Endothelial cell of umbilical vein (primary cell): ENCODE measurements at regions of chr16 and their contacts with region 1.

Region 1: GRCh38 chr16:30091474-30092372 is at the start of gene TBX6:
- DNase-seq: peak; percentile 92
- H3K4me3 ChIP-seq: peak within 1 kb of the TSS; percentile 6 to 53 (median 47)
- H3K27ac ChIP-seq: peak within 1 kb of the TSS; percentile 46
- H3K4me1 ChIP-seq: peaks cover 23% of the 10 kb centered on the region
- H3K27me3 ChIP-seq: no peaks in the 10 kb centered on the region
- CTCF ChIP-seq: peak; percentile 56 to 86
- POLR2A ChIP-seq: peak; percentile 62
- total RNA-seq, gene TBX6: 0.42 and 0.60 TPM in 2 replicates

Region 2: DNA sequence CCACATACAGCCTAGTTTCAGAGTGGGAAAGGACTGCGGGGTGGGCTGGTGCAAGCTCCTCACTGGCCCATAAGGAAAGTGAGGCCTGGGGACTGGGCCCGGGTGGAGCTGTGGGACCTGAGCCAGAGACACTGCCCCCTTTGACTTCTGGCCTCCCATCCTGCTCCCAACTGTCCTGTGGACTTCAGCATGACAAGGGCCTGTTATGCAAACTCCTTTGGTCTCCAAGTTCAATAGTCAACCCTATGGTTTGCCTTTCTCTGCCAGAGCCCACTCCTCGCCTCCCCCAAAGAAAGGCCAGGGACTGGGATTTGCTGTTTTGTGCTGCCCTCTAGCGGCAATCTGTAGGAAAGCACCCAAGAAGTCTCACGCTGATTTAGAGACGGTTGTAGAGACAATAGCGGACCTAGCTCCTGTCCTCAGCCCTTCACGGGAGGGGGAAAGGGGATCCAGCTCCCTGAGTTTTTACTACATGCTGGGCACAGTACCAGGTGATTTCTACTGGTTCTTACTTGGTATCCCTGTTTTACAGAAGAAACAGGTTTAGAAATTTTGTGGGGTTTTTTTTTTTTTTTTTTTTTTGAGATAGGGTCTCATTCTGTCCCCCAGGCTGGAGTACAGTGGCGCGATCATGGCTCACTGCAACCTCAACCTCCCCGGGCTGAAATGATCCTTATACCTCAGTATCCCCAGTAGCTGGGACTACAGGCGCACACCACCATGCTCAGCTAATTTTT is 59.5 kb before region 1 on chr16:
- CTCF ChIA-PET with region 1: interaction called, 14 read pairs
- POLR2A ChIA-PET with region 1: no interaction called
- dilution Hi-C with region 1: no loop called
- intact Hi-C with region 1: no loop called
- DNase-seq: peak; percentile 56
- H3K4me3 ChIP-seq: no peak overlapping the region
- H3K27ac ChIP-seq: no peak overlapping the region
- H3K4me1 ChIP-seq: no peaks in the 10 kb centered on the region
- H3K27me3 ChIP-seq: peaks cover 19 to 20% of the 10 kb centered on the region in 2 experiments
- CTCF ChIP-seq: peak; percentile 75 to 80
- POLR2A ChIP-seq: no peak

Region 3: DNA sequence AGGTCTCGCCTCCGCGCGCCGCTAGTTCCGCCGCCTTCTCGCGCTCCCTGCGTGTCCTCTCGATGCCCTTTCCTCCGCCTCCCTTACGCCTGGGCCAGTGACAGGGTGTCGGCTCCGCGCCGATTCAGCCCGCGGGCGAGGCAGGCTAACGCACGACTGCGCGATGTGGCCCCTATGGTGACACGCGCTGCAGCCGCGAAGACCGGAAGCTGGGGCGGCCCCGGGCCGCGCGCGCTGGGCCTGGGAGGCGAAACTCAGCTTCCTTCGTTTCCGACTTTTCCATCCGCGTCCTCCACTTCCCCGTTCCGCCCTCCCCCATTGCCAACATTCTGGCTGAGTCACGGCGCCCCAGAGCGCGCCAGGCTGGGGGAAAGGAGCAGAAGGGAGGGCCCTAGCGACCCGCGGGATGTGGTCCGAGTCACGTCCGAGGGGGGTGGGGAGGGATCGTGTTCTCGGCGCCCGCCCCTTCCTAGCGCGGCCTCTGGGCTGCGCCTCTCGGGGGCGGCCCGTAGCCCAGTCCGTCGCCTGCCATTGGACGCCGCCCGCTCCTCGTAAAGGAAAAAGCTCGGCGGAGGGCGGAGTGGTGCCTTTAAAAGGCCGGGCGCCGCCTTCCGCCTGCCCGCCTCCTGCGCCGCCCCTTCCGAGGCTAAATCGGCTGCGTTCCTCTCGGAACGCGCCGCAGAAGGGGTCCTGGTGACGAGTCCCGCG is 26.4 kb before region 1 on chr16 and contains the start of gene ALDOA:
- CTCF ChIA-PET with region 1: interaction called, 55 read pairs
- POLR2A ChIA-PET with region 1: interaction called, 8 read pairs
- dilution Hi-C with region 1: no loop called
- intact Hi-C with region 1: loop called (anchors 1 kb)
- DNase-seq: peak; percentile 99
- H3K4me3 ChIP-seq: peak within 1 kb of the TSS; percentile 71 to 95 (median 91)
- H3K27ac ChIP-seq: peak within 1 kb of the TSS; percentile 78
- H3K4me1 ChIP-seq: peaks cover 29% of the 10 kb centered on the region
- H3K27me3 ChIP-seq: no peaks in the 10 kb centered on the region
- CTCF ChIP-seq: no peak
- POLR2A ChIP-seq: peak; percentile 98
- total RNA-seq, gene ALDOA: 1,029 and 1,114 TPM in 2 replicates

Region 4: DNA sequence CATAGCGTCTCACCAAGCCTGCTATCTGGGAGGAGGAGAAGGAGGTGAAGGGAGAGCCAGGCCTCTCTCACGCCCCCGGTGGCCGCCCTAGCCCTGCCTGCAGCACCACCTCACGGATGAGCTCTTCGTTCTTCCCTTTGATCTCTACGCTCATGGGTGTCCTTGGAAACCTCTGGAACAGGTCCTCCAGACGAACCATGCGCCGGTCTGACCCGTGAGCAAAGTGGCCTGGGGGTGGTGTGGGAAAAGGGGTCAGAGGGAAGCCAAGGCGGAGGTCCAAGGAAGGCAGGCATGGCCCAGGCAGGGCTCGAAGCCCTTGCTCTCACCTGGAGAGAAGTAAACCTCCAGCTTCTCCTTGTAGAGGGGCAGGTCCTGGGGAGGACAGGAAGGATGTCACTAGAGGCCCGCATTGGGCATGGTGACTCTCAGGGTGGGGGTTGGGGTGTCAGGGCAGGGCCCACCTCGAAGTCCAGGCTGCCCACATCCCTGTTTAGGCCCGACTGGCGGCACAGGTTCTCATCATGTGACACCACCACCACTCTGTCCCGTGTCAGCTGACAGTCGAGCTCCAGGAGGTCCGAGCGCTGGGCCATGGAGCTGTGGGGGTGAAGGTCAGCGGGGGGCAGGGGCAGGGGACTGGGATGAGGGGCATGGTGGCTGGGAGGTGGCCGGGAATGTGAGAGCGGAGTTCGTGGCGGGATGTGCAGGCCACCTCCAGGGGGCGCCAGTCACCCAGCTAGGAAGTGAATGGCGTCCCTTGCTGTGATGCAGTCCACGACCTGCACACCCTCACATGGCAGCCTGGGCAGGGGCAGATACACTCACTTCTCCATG is 20.7 kb after region 1 on chr16:
- CTCF ChIA-PET with region 1: interaction called, 52 read pairs
- POLR2A ChIA-PET with region 1: no interaction called
- dilution Hi-C with region 1: no loop called
- intact Hi-C with region 1: no loop called
- DNase-seq: no peak
- H3K4me3 ChIP-seq: no peak overlapping the region
- H3K27ac ChIP-seq: no peak overlapping the region
- H3K4me1 ChIP-seq: no peaks in the 10 kb centered on the region
- H3K27me3 ChIP-seq: no peaks in the 10 kb centered on the region
- CTCF ChIP-seq: peak; percentile 50 to 74
- POLR2A ChIP-seq: no peak

Region 5: GRCh38 chr16:30417529-30418349 is 326.0 kb after region 1 on chr16:
- CTCF ChIA-PET with region 1: interaction called, 15 read pairs
- POLR2A ChIA-PET with region 1: no interaction called
- dilution Hi-C with region 1: no loop called
- intact Hi-C with region 1: no loop called
- DNase-seq: peak; percentile 96
- H3K4me3 ChIP-seq: peak overlapping the region in 2 of 3 experiments; percentile 44 to 57
- H3K27ac ChIP-seq: no peak overlapping the region
- H3K4me1 ChIP-seq: peaks cover 3% of the 10 kb centered on the region
- H3K27me3 ChIP-seq: no peaks in the 10 kb centered on the region
- CTCF ChIP-seq: peak in 1 of 2 donors; percentile 37
- POLR2A ChIP-seq: peak; percentile 42

Region 6: DNA sequence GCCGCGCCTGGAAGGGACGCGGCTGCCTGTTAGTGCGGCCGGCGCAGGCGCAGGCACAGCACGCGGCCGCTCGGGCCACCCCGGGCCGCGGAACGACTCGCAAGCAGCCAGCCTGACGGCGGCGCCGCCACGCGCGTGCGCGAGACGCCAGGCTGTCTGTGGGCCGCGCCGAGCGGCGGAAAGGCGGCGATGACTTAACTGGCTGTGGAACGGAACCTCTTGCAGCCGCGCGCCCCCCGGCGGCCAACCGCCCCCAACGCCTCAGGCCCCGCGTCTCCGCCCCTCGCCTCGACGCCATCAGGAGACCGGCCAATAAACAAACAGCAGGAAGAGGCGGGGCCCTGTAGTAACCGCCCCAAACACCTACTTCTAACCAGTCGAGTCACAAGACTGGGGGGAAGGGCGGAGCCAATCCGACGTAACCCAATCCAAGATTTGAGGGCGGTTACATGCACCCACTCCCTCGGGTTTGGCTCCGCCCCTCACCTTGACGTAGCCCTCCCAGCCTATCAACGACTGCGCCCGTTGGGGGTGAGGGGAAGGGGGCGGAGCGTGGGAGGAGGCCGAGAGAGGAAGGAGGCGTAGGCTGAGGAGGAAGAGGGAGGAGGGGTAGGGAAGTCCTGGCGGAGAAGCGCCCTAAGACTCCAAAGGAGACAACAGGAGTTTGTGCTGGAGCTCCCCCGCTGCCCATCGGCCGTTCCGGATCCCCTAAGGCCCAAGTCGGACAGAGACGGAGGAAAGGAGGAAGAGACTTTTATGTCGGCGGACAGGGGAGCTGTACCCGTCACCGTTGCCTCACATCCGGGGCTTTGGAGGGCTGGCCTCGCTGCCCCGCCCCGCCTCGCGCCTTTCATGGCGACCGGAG is 566.4 kb after region 1 on chr16 and contains the start of gene FBRS:
- CTCF ChIA-PET with region 1: no interaction called
- POLR2A ChIA-PET with region 1: no interaction called
- dilution Hi-C with region 1: no loop called
- intact Hi-C with region 1: loop called (anchors 10 kb)
- DNase-seq: peak; percentile 100
- H3K4me3 ChIP-seq: peak within 1 kb of the TSS; percentile 40 to 90 (median 59)
- H3K27ac ChIP-seq: peak within 1 kb of the TSS; percentile 96
- H3K4me1 ChIP-seq: peaks cover 21% of the 10 kb centered on the region
- H3K27me3 ChIP-seq: no peaks in the 10 kb centered on the region
- CTCF ChIP-seq: peak; percentile 91 to 98
- POLR2A ChIP-seq: peak; percentile 87
- total RNA-seq, gene FBRS: 68.6 and 72.5 TPM in 2 replicates